Lower leg skin (tissue), 4 donors: ENCODE measurements at regions of chr18 and their contacts with region 1.

Region 1: DNA sequence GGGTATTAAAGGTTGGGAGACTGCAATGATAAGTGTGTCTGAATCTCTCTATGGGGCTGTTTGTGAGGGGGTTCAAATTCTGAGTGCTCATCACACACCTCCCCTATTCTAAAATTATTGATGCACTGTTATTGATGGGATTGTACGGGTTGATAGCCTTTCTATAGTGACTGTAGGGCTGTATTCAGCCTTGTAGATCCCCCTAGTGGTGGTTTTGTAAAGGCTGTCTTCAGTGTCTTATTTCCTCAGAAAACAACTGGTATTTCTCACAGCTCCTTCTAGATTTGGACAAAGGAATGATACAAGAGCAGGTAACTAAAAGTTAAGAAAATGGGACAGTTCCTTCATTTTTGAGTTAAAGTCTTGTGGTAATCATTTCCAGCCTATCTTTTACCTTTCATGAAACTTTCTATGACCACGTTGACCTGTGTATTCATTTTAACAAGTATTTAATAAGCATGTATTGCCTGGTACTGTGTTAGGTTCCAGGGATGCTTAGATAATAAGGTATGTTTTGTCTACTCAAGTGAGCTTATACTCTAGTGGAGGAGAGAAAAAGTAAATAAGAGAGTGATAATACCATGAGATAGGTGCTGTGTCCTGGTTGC is 21.2 kb downstream of the SMAD4 start:
- DNase-seq: no peak
- H3K4me3 ChIP-seq: no peak overlapping the region
- CTCF ChIP-seq: peak in 1 of 3 donors; percentile 15
- POLR2A ChIP-seq: no peak

Region 2: DNA sequence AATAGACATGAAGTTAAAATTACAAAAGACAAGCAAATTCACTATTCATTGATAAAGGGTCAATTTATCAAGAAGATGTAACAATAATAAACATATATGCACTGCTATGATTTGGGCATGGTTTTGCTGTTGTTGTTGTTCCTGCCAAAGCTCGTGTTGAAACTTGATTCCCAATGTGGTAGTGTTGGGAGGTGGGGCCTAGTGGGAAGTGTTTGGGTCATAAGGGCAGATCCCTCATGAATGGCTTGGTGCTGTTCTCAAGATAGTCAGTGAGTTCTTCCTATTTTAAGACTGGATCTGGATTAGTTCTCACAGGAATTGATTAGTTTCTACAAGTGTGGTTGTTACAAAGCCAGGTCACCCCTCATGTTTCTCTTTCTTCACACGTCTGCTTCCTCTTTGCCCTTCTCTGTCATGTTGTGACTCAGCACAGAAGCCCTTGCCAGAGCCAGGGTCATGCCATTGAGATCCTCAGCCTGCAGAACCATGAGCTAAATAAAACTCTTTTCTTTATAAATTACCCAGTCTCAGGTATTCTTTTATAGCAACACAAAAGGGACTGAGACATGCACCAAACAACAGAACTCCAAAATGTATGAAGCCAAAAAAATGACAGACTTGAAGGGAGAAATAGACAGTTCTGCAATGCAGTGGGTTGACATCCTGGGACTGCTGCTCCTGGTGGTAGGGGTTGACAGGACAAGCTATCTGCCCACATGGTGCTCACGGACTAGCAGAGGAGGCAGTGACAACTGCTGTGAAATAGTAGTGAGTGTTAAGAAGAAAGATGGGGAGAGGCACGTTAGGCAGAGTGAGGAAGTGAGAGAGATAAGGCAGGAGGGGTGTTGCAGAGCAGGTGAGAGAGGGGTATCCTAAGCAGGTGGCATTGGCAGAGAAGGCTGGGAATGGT is 694.9 kb before region 1 on chr18:
- intact Hi-C with region 1: no loop called
- DNase-seq: no peak
- H3K4me3 ChIP-seq: no peak overlapping the region
- CTCF ChIP-seq: no peak
- POLR2A ChIP-seq: no peak

Region 3: DNA sequence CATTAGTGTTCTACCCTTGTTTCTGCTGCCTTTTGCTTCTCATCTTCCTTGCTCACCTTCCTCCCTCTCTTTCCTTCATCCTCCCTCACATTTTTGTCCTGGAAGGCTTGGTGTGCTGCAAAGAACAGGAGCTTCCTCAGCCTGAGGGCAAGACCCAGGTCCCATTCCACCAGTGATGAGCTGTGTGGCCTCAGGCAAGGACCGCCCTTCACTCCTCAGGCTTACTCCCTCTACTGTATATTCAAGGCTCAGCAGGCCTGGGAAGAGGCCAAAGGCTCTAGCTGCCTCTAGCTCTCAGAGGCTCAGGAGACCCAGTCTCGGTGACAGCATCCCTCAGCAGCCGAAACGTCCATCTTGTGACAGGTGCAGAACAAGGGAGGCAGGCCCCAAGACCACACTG is 328.9 kb before region 1 on chr18:
- intact Hi-C with region 1: no loop called
- DNase-seq: no peak
- H3K4me3 ChIP-seq: no peak overlapping the region
- CTCF ChIP-seq: no peak
- POLR2A ChIP-seq: no peak

Region 4: GRCh38 chr18:50819728-50820378 is 231.4 kb before region 1 on chr18 and contains the start of gene MRO:
- intact Hi-C with region 1: loop called (anchors 5 kb)
- DNase-seq: peak; percentile 72 to 96
- H3K4me3 ChIP-seq: no peak within 1 kb of the TSS
- CTCF ChIP-seq: peak in 1 of 3 donors; percentile 65
- POLR2A ChIP-seq: no peak
- total RNA-seq, gene MRO: 0.10 TPM in 1 of 4 donors, not detected in the others